ENCODE measurements at regions of chr16 and their contacts with region 1.

Region 1: DNA sequence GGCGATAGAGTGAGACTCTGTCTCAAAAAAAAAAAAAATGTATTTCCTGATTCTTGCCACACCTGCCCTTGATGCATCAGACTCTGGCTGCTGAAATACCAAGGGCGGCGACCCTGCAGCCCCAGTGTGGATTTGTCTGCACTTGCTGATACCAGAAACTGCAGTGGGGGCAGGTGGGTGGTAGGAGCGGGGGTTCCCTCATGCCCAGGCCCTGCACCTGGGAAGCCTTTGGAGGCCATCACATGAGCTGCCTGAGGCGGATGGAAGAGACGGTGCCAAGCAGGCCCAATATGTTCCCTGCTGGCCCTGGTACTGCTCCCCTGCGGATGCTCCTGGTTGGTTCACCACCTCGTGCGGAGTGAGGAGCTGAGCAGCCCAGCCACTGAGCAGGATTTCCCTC is 50.6 kb downstream of the MARF1 start:
- DNase-seq: no peak
- ATAC-seq: no peak
- H3K4me3 ChIP-seq: no peak overlapping the region
- H3K27ac ChIP-seq: no peak overlapping the region
- H3K4me1 ChIP-seq: peaks cover 6% of the 10 kb centered on the region
- H3K27me3 ChIP-seq: no peaks in the 10 kb centered on the region
- CTCF ChIP-seq: no peak
- EP300 ChIP-seq: no peak
- POLR2A ChIP-seq: no peak
- RAD21 ChIP-seq: no peak

Region 2: GRCh38 chr16:15643048-15643945 is 51.0 kb after region 1 on chr16 and contains the start of gene MARF1:
- CTCF ChIA-PET with region 1: interaction called, 3 read pairs
- POLR2A ChIA-PET with region 1: interaction called, 16 read pairs
- RAD21 ChIA-PET with region 1: interaction called, 6 read pairs
- SMC1A ChIA-PET with region 1: interaction called, 6 read pairs
- in situ Hi-C with region 1: no loop called
- intact Hi-C with region 1: loop called (anchors 2 kb)
- DNase-seq: peak; percentile 77
- ATAC-seq: peak; percentile 63
- H3K4me3 ChIP-seq: peak within 1 kb of the TSS; percentile 87
- H3K27ac ChIP-seq: peak within 1 kb of the TSS; percentile 97
- H3K4me1 ChIP-seq: peaks cover 35% of the 10 kb centered on the region
- H3K27me3 ChIP-seq: no peaks in the 10 kb centered on the region
- CTCF ChIP-seq: peak; percentile 19 to 28 (median 24); a peak in 2 of 6 replicates
- EP300 ChIP-seq: no peak; a peak in 1 of 4 replicates
- POLR2A ChIP-seq: peak; percentile 64; the same call in 1 of the 2 replicates
- RAD21 ChIP-seq: 0 out of 2 replicates have a peak, but pooled peaks have one; percentile 7
- polyA plus RNA-seq, gene MARF1: 4.5 to 5.9 TPM

Region 3: DNA sequence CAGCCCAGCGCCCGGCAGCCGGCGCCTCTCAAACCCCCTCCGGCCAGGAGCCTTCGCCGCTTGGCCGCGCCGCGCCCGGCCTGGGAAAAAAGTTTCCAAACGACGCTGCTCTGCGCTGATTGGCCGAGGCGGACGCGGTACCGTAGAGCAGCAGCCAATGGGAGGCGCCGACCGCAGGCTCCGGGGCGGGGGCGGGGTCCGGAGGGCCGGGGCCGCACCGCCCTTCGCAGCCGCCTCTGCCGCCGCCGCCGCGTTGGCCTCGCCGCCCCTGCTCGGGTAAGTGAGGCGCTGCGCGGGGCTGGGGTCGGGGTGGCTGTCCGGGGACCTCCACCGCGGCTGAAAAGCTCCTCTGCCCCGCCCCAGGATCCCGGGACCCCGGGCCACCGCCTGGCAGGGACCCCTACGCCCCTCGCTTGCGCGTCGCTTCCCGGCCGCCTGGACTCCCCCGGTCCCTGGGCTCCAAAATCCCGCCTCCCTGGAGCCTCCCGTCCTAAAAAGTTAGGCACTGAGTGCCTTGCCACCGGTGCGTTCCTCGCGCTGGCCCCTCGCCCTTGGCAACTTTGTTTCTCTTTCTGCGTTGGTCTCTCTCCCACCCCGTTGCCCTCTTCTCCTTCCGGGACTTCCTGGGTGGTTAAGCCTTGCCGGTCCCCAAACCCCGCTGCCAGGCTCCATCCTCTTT is 57.8 kb after region 1 on chr16 and contains the start of gene NDE1:
- CTCF ChIA-PET with region 1: no interaction called
- POLR2A ChIA-PET with region 1: no interaction called
- RAD21 ChIA-PET with region 1: interaction called, 3 read pairs
- SMC1A ChIA-PET with region 1: interaction called, 5 read pairs
- in situ Hi-C with region 1: no loop called
- intact Hi-C with region 1: loop called (anchors 2 kb)
- DNase-seq: no peak
- ATAC-seq: peak; percentile 96
- H3K4me3 ChIP-seq: peak within 1 kb of the TSS; percentile 99
- H3K27ac ChIP-seq: peak within 1 kb of the TSS; percentile 79
- H3K4me1 ChIP-seq: peaks cover 29% of the 10 kb centered on the region
- H3K27me3 ChIP-seq: no peaks in the 10 kb centered on the region
- CTCF ChIP-seq: no peak
- EP300 ChIP-seq: no peak
- POLR2A ChIP-seq: peak; percentile 84
- RAD21 ChIP-seq: no peak
- polyA plus RNA-seq, gene NDE1: 5.7 to 7.4 TPM

Measured in GM12878 (cell line).